Naive thymus-derived CD8-positive, alpha-beta T cell (primary cell): ENCODE measurements at regions of chr5 and their contacts with region 1.

Region 1: GRCh38 chr5:180860887-180861822 is at the start of gene ZFP62:
- DNase-seq: peak; percentile 75 to 91 (median 86)
- ATAC-seq: peak; percentile 80
- H3K4me3 Mint-ChIP-seq: peak within 1 kb of the TSS; percentile 83 to 95 (median 91)
- H3K27ac Mint-ChIP-seq: peak within 1 kb of the TSS; percentile 87 to 97 (median 96)
- H3K4me1 Mint-ChIP-seq: peaks cover 18 to 32% (median 21%) of the 10 kb centered on the region in 4 donors
- H3K27me3 Mint-ChIP-seq: peaks cover 0 to 2% (median 0%) of the 10 kb centered on the region in 5 donors
- polyA plus RNA-seq, gene ZFP62: 20.0 to 26.0 (median 25.7) TPM

Region 2: GRCh38 chr5:180784497-180785097 is 76.6 kb before region 1 on chr5:
- POLR2A ChIA-PET with region 1: interaction called, 24 read pairs
- DNase-seq: peak; percentile 48 to 91 (median 70)
- ATAC-seq: peak; percentile 78 to 91
- H3K4me3 Mint-ChIP-seq: no peak overlapping the region
- H3K27ac Mint-ChIP-seq: peak overlapping the region; percentile 8 to 87 (median 47)
- H3K4me1 Mint-ChIP-seq: peaks cover 23 to 57% (median 44%) of the 10 kb centered on the region in 4 donors
- H3K27me3 Mint-ChIP-seq: no peaks in the 10 kb centered on the region

Region 3: DNA sequence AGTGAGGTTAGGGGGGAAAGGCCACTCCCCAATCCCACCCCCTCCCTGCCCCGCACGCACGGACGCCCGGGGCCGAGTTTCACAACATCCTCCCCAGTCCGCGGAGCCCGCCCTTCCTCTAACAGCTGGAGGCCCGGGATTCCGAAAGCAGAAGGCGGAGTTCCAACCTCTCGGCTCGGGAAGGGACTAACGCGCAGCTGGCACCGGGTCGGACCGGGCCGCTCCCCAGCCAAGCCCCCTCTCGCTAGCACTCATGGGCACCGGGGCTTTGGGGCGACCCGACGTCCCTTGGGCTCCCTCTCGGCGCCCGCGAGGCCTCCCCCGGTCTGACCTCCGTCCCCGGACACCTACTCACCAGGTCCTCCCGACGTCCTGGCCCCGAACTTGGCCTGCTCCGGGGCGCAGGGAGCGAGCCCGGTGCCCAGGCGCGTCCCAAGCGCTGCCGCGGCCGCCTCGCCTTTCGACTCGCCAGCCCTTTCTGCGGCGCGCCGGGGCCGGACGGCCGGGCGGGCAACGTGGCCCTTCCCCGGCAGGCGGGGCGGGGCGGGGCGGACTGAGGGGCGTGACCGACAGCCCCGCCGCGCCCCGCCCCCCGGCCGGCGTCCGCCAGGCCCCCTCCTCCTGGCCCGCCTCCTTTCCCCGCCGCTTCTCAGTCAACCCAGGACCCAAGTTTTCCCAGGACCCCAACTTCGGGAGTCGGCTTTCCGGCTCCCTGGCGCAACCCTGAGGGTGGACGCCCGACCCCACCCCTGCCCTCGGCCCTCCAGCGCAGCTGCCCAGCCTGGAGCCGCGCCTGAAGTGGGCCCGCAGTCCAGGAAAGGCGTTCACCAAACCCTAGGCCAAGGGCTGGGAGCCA is 58.6 kb before region 1 on chr5 and contains the start of gene MGAT1:
- POLR2A ChIA-PET with region 1: interaction called, 58 read pairs
- DNase-seq: peak; percentile 43 to 82 (median 68)
- ATAC-seq: peak; percentile 44 to 46
- H3K4me3 Mint-ChIP-seq: peak within 1 kb of the TSS; percentile 84 to 99 (median 93)
- H3K27ac Mint-ChIP-seq: peak within 1 kb of the TSS; percentile 93 to 100 (median 99)
- H3K4me1 Mint-ChIP-seq: peaks cover 58 to 88% (median 85%) of the 10 kb centered on the region in 4 donors
- H3K27me3 Mint-ChIP-seq: no peaks in the 10 kb centered on the region
- polyA plus RNA-seq, gene MGAT1: 108 to 149 (median 111) TPM

Region 4: GRCh38 chr5:180810210-180810958 is 50.8 kb before region 1 on chr5:
- POLR2A ChIA-PET with region 1: interaction called, 58 read pairs
- DNase-seq: peak; percentile 88 to 100 (median 96)
- ATAC-seq: peak; percentile 72 to 74
- H3K4me3 Mint-ChIP-seq: peak overlapping the region; percentile 83 to 99 (median 92)
- H3K27ac Mint-ChIP-seq: peak overlapping the region; percentile 93 to 100 (median 100)
- H3K4me1 Mint-ChIP-seq: peaks cover 47 to 84% (median 75%) of the 10 kb centered on the region in 4 donors
- H3K27me3 Mint-ChIP-seq: no peaks in the 10 kb centered on the region

Region 5: GRCh38 chr5:180816608-180817534 is 44.3 kb before region 1 on chr5:
- POLR2A ChIA-PET with region 1: interaction called, 57 read pairs
- DNase-seq: peak in 4 of 10 donors; percentile 20 to 41 (median 26)
- ATAC-seq: peak; percentile 76 to 89
- H3K4me3 Mint-ChIP-seq: peak overlapping the region; percentile 30 to 88 (median 76)
- H3K27ac Mint-ChIP-seq: peak overlapping the region; percentile 71 to 93 (median 86)
- H3K4me1 Mint-ChIP-seq: peaks cover 30 to 73% (median 45%) of the 10 kb centered on the region in 4 donors
- H3K27me3 Mint-ChIP-seq: no peaks in the 10 kb centered on the region

Region 6: GRCh38 chr5:180831139-180832048 is 29.8 kb before region 1 on chr5:
- POLR2A ChIA-PET with region 1: interaction called, 124 read pairs
- DNase-seq: peak; percentile 49 to 83 (median 70)
- ATAC-seq: peak; percentile 37 to 68
- H3K4me3 Mint-ChIP-seq: peak overlapping the region; percentile 94 to 100 (median 96)
- H3K27ac Mint-ChIP-seq: peak overlapping the region; percentile 96 to 100 (median 98)
- H3K4me1 Mint-ChIP-seq: peaks cover 24 to 63% (median 61%) of the 10 kb centered on the region in 4 donors
- H3K27me3 Mint-ChIP-seq: no peaks in the 10 kb centered on the region

Region 7: GRCh38 chr5:180848878-180849277 is 12.3 kb before region 1 on chr5:
- POLR2A ChIA-PET with region 1: interaction called, 14 read pairs
- DNase-seq: no peak
- ATAC-seq: no peak
- H3K4me3 Mint-ChIP-seq: no peak overlapping the region
- H3K27ac Mint-ChIP-seq: no peak overlapping the region
- H3K4me1 Mint-ChIP-seq: peaks cover 2 to 33% (median 13%) of the 10 kb centered on the region in 4 donors
- H3K27me3 Mint-ChIP-seq: no peaks in the 10 kb centered on the region